Activated CD4-positive, alpha-beta T cell treated with anti-CD3 and anti-CD28 coated beads for 36 hours (primary cell): ENCODE measurements at regions of chr2 and their contacts with region 1.

Region 1: GRCh38 chr2:75199428-75200011 is at the start of gene TACR1:
- DNase-seq: peak; percentile 74
- ATAC-seq: peak; percentile 80
- H3K4me3 Mint-ChIP-seq: no peak within 1 kb of the TSS
- H3K27ac Mint-ChIP-seq: no peak within 1 kb of the TSS
- H3K4me1 Mint-ChIP-seq: peaks cover 13% of the 10 kb centered on the region
- H3K27me3 Mint-ChIP-seq: peaks cover 46% of the 10 kb centered on the region
- total RNA-seq, gene TACR1: not detected

Region 2: GRCh38 chr2:74764429-74765272 is 434.9 kb before region 1 on chr2:
- CTCF ChIA-PET with region 1: no interaction called
- POLR2A ChIA-PET with region 1: no interaction called
- intact Hi-C with region 1: no loop called
- DNase-seq: no peak
- ATAC-seq: peak; percentile 26
- H3K4me3 Mint-ChIP-seq: no peak overlapping the region
- H3K27ac Mint-ChIP-seq: no peak overlapping the region
- H3K4me1 Mint-ChIP-seq: peaks cover 4% of the 10 kb centered on the region
- H3K27me3 Mint-ChIP-seq: no peaks in the 10 kb centered on the region

Region 3: GRCh38 chr2:75113231-75113869 is 86.2 kb before region 1 on chr2:
- CTCF ChIA-PET with region 1: no interaction called
- POLR2A ChIA-PET with region 1: no interaction called
- intact Hi-C with region 1: no loop called
- DNase-seq: no peak
- ATAC-seq: no peak
- H3K4me3 Mint-ChIP-seq: no peak overlapping the region
- H3K27ac Mint-ChIP-seq: no peak overlapping the region
- H3K4me1 Mint-ChIP-seq: no peaks in the 10 kb centered on the region
- H3K27me3 Mint-ChIP-seq: peaks cover 2% of the 10 kb centered on the region

Region 4: DNA sequence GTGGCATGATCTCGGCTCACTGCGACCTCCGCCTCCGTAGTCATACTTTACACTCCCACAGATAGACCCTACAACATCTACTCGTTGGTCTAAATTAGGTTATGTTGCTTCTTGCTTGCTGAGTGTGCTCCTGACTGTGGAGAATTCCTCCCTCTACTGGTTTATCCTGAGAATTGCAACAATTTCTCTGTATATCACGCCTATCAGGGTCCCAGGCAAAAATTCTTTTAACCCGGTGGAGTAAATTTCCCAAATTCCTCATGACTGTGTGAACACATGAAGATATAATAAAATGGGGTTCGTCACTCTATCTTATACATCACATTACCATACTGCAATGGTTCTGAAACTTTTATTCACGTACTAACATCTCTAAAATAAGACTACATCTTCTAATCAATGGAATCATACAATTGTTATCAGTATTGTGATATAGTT is 204.5 kb after region 1 on chr2:
- CTCF ChIA-PET with region 1: interaction called, 6 read pairs
- POLR2A ChIA-PET with region 1: no interaction called
- intact Hi-C with region 1: loop called (anchors 5 kb)
- DNase-seq: no peak
- ATAC-seq: peak; percentile 63
- H3K4me3 Mint-ChIP-seq: no peak overlapping the region
- H3K27ac Mint-ChIP-seq: no peak overlapping the region
- H3K4me1 Mint-ChIP-seq: no peaks in the 10 kb centered on the region
- H3K27me3 Mint-ChIP-seq: peaks cover 8% of the 10 kb centered on the region

Region 5: DNA sequence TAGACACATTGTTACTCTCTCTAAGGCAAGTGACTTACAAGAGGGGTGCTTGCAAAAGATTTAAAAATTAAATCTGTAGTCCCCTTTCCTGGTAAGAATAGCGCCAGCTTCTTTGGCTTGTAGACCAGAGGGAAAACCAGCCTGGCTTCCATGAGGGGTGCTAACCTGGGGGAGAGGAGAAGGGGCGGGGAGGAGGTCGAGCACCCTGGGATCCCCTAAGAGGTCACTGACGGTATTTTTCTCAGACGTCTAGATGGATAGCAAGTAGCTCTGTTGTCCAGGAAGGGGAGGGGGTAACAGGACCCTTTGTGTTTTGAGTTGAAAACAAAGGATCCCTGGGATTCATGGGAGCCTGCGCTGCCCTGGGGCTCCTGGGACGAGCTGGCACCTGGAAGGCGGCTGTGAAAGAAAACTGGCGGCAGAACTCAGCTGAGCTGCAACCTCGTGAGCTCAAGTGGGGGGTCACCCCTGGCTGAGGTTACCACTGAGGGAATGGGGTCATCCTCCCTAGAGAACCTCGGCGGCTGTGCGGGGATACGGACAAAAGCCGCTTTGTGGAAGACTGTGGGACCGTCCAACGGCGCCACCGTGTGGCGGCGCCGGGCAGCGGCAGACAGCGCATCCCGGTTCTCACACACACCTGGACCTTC is 409.3 kb after region 1 on chr2:
- CTCF ChIA-PET with region 1: interaction called, 3 read pairs
- POLR2A ChIA-PET with region 1: no interaction called
- intact Hi-C with region 1: loop called in 1 of 2 experiments (anchors 2 kb)
- DNase-seq: peak; percentile 72
- ATAC-seq: peak; percentile 81
- H3K4me3 Mint-ChIP-seq: no peak overlapping the region
- H3K27ac Mint-ChIP-seq: no peak overlapping the region
- H3K4me1 Mint-ChIP-seq: peaks cover 6% of the 10 kb centered on the region
- H3K27me3 Mint-ChIP-seq: peaks cover 55% of the 10 kb centered on the region